GM12878 (cell line): ENCODE measurements at regions of chr15 and their contacts with region 1.

Region 1: DNA sequence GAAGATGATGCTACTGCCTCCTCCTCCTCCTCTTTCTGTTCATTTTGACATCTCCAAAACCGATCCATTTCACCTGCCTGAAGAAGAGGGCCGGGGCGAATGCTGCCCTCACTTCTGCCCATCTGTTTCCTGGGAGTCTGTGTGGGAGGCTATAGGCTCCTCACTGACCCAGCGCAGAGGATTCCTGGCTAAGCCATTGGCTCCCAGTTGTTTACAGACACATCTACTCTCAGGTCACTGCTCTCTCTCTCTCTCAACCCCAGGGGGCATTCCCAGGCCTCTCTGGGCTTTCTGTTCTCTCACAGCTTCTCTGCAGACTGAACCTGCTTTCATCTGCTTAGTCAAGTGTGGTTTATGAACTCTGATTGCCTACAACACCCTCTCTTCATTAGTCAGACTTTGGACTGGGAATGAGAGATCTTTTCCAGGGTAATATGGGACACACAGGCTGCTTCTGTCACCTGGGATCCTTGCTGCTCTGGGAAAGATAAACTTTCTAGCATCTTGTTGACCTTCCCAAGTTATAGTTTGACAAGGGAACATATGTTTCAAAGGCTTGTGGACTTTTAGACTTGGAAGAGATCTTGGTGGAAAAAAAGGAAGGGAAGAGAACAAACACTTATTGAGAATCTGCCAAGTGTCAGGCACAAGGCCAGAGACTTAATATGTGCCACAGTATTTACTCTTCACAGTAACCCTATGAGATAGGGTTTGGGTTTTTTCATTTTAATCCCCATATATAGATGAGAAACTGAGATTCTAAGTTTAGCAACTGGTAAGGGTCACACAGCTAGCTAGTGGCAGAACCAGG is 30.2 kb upstream of the USP3 start:
- DNase-seq: peak; percentile 97
- ATAC-seq: peak; percentile 80
- H3K4me3 ChIP-seq: peak overlapping the region; percentile 59
- H3K27ac ChIP-seq: peak overlapping the region; percentile 100
- H3K4me1 ChIP-seq: peaks cover 62% of the 10 kb centered on the region
- H3K27me3 ChIP-seq: no peaks in the 10 kb centered on the region
- CTCF ChIP-seq: no peak
- EP300 ChIP-seq: peak; percentile 52 to 74; a peak in 2 of 4 replicates
- POLR2A ChIP-seq: no peak; the same call in 1 of the 2 replicates
- RAD21 ChIP-seq: peak; percentile 40; the same call in 1 of the 2 replicates

Region 2: DNA sequence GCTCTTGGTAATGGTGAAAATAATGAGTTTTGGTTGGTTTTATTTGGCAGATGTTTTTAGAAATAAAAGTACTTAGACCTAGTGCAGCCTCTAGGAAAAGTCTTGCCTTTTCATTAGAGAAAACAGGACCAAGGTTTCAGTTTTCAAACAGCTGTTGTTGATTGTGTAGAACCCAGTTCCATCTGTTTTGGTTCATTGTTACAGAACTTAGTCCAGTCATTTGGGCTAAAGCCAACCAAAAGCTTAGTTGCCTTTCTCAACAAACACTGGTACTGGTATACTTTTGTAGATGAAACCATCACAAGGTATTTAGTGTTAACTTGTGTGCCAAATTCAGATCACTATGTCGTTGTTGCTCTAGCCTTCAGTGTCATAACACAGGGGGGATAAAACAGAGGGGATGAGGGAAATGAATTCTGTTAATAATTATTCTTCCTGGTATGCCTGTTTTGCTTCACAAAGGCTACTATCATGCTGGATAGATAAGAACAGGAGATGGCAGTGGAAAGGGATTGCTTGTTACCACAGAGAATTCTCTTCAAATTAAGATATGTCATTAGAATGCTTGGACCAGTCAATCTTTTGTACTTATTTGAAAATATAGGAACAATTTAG is 209.4 kb before region 1 on chr15:
- CTCF ChIA-PET with region 1: no interaction called
- POLR2A ChIA-PET with region 1: no interaction called
- RAD21 ChIA-PET with region 1: no interaction called
- SMC1A ChIA-PET with region 1: no interaction called
- in situ Hi-C with region 1: no loop called
- intact Hi-C with region 1: no loop called
- DNase-seq: no peak
- ATAC-seq: no peak
- H3K4me3 ChIP-seq: no peak overlapping the region
- H3K27ac ChIP-seq: no peak overlapping the region
- H3K4me1 ChIP-seq: no peaks in the 10 kb centered on the region
- H3K27me3 ChIP-seq: no peaks in the 10 kb centered on the region
- CTCF ChIP-seq: no peak
- EP300 ChIP-seq: no peak
- POLR2A ChIP-seq: no peak
- RAD21 ChIP-seq: no peak

Region 3: GRCh38 chr15:63487076-63487757 is 13.0 kb after region 1 on chr15:
- CTCF ChIA-PET with region 1: interaction called, 62 read pairs
- POLR2A ChIA-PET with region 1: interaction called, 38 read pairs
- RAD21 ChIA-PET with region 1: interaction called, 84 read pairs
- SMC1A ChIA-PET with region 1: interaction called, 89 read pairs
- in situ Hi-C with region 1: no loop called
- intact Hi-C with region 1: loop called (anchors 1 kb)
- DNase-seq: no peak
- ATAC-seq: peak; percentile 74
- H3K4me3 ChIP-seq: peak overlapping the region; percentile 42; the same call in 1 of the 2 replicates
- H3K27ac ChIP-seq: peak overlapping the region; percentile 89
- H3K4me1 ChIP-seq: peaks cover 57% of the 10 kb centered on the region
- H3K27me3 ChIP-seq: no peaks in the 10 kb centered on the region
- CTCF ChIP-seq: peak; percentile 84 to 98 (median 97)
- EP300 ChIP-seq: no peak
- POLR2A ChIP-seq: no peak
- RAD21 ChIP-seq: peak; percentile 82

Region 4: GRCh38 chr15:63539521-63539920 is 65.3 kb after region 1 on chr15:
- CTCF ChIA-PET with region 1: interaction called, 6 read pairs
- POLR2A ChIA-PET with region 1: interaction called, 9 read pairs
- RAD21 ChIA-PET with region 1: interaction called, 10 read pairs
- SMC1A ChIA-PET with region 1: interaction called, 11 read pairs
- in situ Hi-C with region 1: no loop called
- intact Hi-C with region 1: no loop called
- DNase-seq: no peak
- ATAC-seq: no peak
- H3K4me3 ChIP-seq: no peak overlapping the region
- H3K27ac ChIP-seq: no peak overlapping the region
- H3K4me1 ChIP-seq: peaks cover 35% of the 10 kb centered on the region
- H3K27me3 ChIP-seq: no peaks in the 10 kb centered on the region
- CTCF ChIP-seq: no peak
- EP300 ChIP-seq: no peak
- POLR2A ChIP-seq: no peak
- RAD21 ChIP-seq: no peak